ENCODE measurements at regions of chr9 and their contacts with region 1.

Region 1: GRCh38 chr9:11072176-11072575 is 459.4 kb upstream of the PTPRD start:
- DNase-seq: no peak
- CTCF ChIP-seq: no peak

Region 2: GRCh38 chr9:10863476-10863875 is 208.7 kb before region 1 on chr9:
- CTCF ChIA-PET with region 1: no interaction called
- POLR2A ChIA-PET with region 1: no interaction called
- DNase-seq: no peak
- CTCF ChIP-seq: no peak

Region 3: GRCh38 chr9:11088821-11089374 is 16.7 kb after region 1 on chr9:
- CTCF ChIA-PET with region 1: interaction called, 11 read pairs
- POLR2A ChIA-PET with region 1: no interaction called
- DNase-seq: no peak
- CTCF ChIP-seq: no peak

Region 4: GRCh38 chr9:11103525-11103924 is 31.3 kb after region 1 on chr9:
- CTCF ChIA-PET with region 1: no interaction called
- POLR2A ChIA-PET with region 1: no interaction called
- DNase-seq: no peak
- CTCF ChIP-seq: no peak